ENCODE measurements at regions of chr12 and their contacts with region 1.

Region 1: GRCh38 chr12:64801381-64801780 is 23.1 kb upstream of the TBC1D30 start:
- DNase-seq: no peak
- H3K4me3 Mint-ChIP-seq: no peak overlapping the region
- H3K27ac Mint-ChIP-seq: no peak overlapping the region
- H3K4me1 Mint-ChIP-seq: no peaks in the 10 kb centered on the region
- H3K27me3 Mint-ChIP-seq: peaks cover 28% of the 10 kb centered on the region

Region 2: DNA sequence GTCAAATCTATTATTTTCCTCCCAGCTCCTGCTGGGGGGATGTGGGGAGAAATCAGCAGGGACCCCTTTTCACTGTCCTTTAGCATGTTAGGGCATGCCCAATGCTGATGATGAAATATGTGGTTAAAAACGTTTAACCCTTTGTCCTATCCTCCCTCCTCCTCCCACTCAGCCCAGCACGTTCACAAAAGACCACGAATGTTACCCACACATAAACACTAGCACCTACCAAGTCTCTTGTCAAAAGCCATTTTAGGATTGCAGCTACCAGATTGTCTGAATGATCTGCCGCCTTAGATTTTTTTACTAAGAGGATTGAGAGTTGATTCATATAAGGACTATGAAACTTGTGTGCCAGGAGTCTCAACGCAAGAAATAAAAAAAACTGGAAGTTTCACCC is 279.1 kb before region 1 on chr12:
- CTCF ChIA-PET with region 1: no interaction called
- DNase-seq: no peak
- H3K4me3 Mint-ChIP-seq: no peak overlapping the region
- H3K27ac Mint-ChIP-seq: no peak overlapping the region
- H3K4me1 Mint-ChIP-seq: peaks cover 6% of the 10 kb centered on the region
- H3K27me3 Mint-ChIP-seq: peaks cover 6% of the 10 kb centered on the region

Region 3: GRCh38 chr12:64551698-64552097 is 249.7 kb before region 1 on chr12:
- CTCF ChIA-PET with region 1: interaction called, 11 read pairs
- DNase-seq: no peak
- H3K4me3 Mint-ChIP-seq: no peak overlapping the region
- H3K27ac Mint-ChIP-seq: no peak overlapping the region
- H3K4me1 Mint-ChIP-seq: peaks cover 11% of the 10 kb centered on the region
- H3K27me3 Mint-ChIP-seq: peaks cover 30% of the 10 kb centered on the region

Measured in activated naive CD4-positive, alpha-beta T cell treated with anti-CD3 and anti-CD28 coated beads, Interleukin-2, amount 10 ng/mL, durations not matched to agents 7 days and 5 days (primary cell).